ENCODE measurements at regions of chr3 and their contacts with region 1.

Region 1: GRCh38 chr3:73029321-73029796 is 32.1 kb upstream of the EBLN2 start:
- DNase-seq: no peak
- ATAC-seq: peak; percentile 94
- H3K4me3 Mint-ChIP-seq: peak overlapping the region; percentile 2
- H3K27ac Mint-ChIP-seq: peak overlapping the region; percentile 82
- H3K4me1 Mint-ChIP-seq: peaks cover 89% of the 10 kb centered on the region
- H3K27me3 Mint-ChIP-seq: no peaks in the 10 kb centered on the region

Region 2: DNA sequence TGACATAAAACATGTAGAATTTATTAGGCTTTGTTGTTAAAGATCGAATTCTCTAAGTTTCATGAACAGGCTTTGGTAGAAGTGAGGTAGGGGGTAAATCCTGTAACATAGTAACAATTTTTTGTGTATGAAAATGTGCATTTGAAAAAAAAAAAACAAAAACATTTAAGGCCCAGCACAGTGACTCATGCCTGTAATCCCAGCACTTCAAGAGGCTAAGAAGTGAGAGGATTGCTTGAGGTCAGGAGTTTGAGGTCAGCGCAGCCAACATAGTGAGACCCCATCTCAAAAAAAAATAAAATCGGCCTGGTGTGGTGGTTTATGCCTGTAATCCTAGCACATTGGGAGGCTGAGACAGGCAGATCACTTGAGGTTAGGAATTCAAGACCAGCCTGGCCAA is 59.6 kb before region 1 on chr3:
- CTCF ChIA-PET with region 1: no interaction called
- POLR2A ChIA-PET with region 1: no interaction called
- intact Hi-C with region 1: no loop called
- DNase-seq: no peak
- ATAC-seq: no peak
- H3K4me3 Mint-ChIP-seq: no peak overlapping the region
- H3K27ac Mint-ChIP-seq: no peak overlapping the region
- H3K4me1 Mint-ChIP-seq: peaks cover 23% of the 10 kb centered on the region
- H3K27me3 Mint-ChIP-seq: no peaks in the 10 kb centered on the region

Region 3: DNA sequence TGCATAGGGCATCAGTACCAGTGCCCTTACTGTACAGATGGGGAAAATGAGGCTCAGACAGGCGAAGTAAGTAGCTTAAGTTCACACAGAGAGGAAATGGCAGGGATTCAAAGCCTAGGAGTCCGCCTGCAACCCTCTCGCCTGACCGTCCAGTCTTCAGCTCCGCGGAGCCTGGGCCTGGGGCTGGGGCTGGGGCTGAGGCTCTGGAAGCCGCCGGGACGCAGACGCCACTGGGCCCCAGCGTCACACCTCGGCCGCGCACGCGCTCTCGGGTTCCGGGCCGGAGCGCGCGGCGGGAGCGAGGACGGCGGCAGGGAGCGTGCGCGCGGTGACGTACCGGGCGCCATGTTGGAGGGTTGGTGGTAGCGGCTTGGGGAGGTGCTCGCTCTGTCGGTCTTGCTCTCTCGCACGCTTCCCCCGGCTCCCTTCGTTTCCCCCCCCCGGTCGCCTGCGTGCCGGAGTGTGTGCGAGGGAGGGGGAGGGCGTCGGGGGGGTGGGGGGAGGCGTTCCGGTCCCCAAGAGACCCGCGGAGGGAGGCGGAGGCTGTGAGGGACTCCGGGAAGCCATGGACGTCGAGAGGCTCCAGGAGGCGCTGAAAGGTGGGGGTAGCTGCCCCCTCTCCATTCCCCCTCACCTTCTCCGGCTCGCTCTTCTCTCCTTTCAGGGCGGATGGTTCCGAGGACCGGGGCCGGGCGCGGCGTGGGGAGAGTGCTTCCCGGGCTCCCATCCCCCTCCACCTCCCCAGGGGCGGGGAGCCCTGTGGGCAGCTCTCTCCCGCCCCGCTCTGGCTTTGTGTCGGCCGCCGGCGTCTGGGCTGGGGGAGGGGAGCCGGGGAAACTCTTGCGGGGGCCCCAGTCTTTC is 32.7 kb before region 1 on chr3 and contains the start of gene PPP4R2:
- CTCF ChIA-PET with region 1: no interaction called
- POLR2A ChIA-PET with region 1: interaction called, 3 read pairs
- intact Hi-C with region 1: loop called (anchors 1 kb)
- DNase-seq: peak; percentile 94
- ATAC-seq: peak; percentile 88
- H3K4me3 Mint-ChIP-seq: peak within 1 kb of the TSS; percentile 85
- H3K27ac Mint-ChIP-seq: peak within 1 kb of the TSS; percentile 93
- H3K4me1 Mint-ChIP-seq: peaks cover 35% of the 10 kb centered on the region
- H3K27me3 Mint-ChIP-seq: no peaks in the 10 kb centered on the region
- total RNA-seq, gene PPP4R2: 75.1 to 91.5 TPM

Region 4: DNA sequence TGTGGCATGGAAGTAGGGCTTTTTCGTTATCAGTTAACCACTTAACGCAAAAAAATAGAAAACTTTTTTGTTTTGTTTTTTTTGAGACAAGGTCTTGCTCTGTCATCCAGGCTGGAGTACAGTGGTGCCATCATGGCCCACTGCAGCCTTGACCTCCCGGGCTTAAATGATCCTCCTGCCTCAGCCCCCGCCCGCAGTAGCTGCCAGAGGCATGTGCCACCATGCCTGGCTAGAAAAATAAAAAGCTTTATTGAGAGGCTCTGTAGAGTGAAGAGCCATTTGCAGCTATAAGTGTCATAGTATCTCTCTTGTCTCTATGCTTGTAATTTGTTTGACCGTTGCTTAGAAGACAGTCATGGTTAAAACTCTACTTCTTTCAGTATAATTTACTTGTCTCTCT is 19.2 kb before region 1 on chr3:
- CTCF ChIA-PET with region 1: interaction called, 12 read pairs
- POLR2A ChIA-PET with region 1: no interaction called
- intact Hi-C with region 1: no loop called
- DNase-seq: no peak
- ATAC-seq: no peak
- H3K4me3 Mint-ChIP-seq: no peak overlapping the region
- H3K27ac Mint-ChIP-seq: no peak overlapping the region
- H3K4me1 Mint-ChIP-seq: peaks cover 82% of the 10 kb centered on the region
- H3K27me3 Mint-ChIP-seq: no peaks in the 10 kb centered on the region

Region 5: DNA sequence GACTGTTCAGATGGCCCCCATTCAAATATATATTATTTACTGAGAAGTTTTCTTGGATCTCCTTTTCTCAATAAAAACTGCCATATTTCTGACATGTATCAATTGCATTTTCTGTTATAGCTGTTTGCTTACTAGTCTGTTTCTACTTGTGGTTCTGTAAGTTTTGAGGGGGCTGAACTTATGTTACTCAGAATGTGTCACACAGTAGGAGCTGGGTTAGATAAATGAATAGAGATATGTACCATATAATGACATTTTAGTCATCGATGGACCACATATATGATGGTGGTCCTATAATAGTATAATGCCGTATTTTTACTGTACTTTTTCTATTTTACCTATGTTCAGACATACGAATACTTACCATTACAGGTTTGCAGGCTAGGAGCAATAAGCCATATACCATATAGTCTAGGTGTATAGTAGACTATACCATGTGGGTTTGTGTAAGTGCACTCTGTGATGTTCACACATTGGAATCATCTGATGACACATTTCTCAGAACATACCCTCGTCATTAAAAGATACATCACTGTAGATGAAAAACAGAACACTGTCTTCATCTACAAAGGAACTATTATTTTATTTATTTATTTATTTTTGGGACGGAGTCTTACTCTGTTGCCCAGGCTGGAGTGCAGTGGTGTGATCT is 10.4 kb before region 1 on chr3:
- CTCF ChIA-PET with region 1: interaction called, 5 read pairs
- POLR2A ChIA-PET with region 1: interaction called, 3 read pairs
- intact Hi-C with region 1: loop called in 1 of 2 experiments (anchors 1 kb)
- DNase-seq: no peak
- ATAC-seq: peak; percentile 77
- H3K4me3 Mint-ChIP-seq: no peak overlapping the region
- H3K27ac Mint-ChIP-seq: peak overlapping the region; percentile 78
- H3K4me1 Mint-ChIP-seq: peaks cover 60% of the 10 kb centered on the region
- H3K27me3 Mint-ChIP-seq: no peaks in the 10 kb centered on the region

Region 6: DNA sequence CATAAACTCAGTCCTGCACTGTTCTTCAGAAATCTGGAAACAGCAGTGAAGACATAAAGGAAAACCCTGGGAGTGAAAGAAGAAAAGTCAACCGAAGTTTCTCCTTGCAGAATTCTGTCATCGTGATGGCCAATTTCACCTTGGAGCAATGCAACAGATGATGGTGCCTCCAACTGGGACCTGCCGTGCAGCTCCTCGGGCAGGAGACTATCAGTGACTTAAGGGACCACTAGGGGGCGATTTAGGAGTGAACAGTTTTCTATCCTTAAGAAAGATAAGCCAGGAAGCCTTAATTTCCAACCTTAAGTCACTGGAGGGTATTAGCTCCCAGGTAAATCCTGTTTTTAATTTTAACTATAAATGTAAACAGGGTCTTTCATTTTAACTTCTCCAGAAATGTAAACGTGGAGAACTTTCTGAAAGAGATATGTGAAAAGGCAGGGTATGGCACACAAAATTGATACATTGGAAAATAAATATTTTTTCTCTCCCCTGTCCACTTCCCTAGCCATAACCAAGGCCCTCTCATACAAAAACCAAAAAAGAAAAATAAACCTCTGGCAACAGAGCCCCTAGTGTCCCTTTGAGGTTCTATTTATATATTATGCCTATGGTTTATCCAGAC is 479.1 kb after region 1 on chr3:
- CTCF ChIA-PET with region 1: no interaction called
- POLR2A ChIA-PET with region 1: no interaction called
- intact Hi-C with region 1: no loop called
- DNase-seq: peak; percentile 44
- ATAC-seq: no peak
- H3K4me3 Mint-ChIP-seq: no peak overlapping the region
- H3K27ac Mint-ChIP-seq: no peak overlapping the region
- H3K4me1 Mint-ChIP-seq: no peaks in the 10 kb centered on the region
- H3K27me3 Mint-ChIP-seq: peaks cover 13% of the 10 kb centered on the region